ENCODE measurements at regions of chr2 and their contacts with region 1.

Region 1: DNA sequence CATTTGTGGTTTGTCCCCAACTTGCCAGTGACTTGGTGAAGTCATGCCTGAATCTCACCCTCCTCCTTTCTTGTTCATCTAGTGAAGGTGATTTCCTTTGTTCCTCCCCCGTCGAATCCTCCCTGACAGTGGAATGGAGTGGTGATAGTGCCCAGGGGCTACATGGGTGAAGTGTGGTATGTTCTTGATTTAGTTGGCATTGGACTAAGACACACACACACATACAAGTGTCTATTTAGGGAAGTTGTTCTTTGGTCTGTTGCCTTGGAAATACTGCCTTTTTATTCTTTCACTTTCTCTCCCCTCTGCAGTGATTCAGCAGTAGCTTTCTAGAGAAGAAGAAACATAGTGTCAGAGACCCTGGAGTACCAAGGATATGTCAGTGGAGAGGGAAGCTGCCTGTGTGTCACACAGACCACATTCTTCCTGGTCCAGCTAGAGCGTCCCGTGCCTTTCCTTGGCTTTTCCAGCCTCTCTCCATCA is 10.9 kb downstream of the INPP4A start:
- DNase-seq: peak; percentile 83 to 94 (median 91)
- H3K4me3 ChIP-seq: peak overlapping the region in 1 of 3 experiments; percentile 48
- H3K4me3 Mint-ChIP-seq: peak overlapping the region; percentile 62 to 86
- H3K27ac ChIP-seq: peak overlapping the region; percentile 92 to 97
- H3K27ac Mint-ChIP-seq: peak overlapping the region; percentile 97 to 100 (median 99)
- H3K4me1 ChIP-seq: peaks cover 72 to 88% of the 10 kb centered on the region in 2 donors
- H3K4me1 Mint-ChIP-seq: peaks cover 90% of the 10 kb centered on the region
- H3K27me3 ChIP-seq: no peaks in the 10 kb centered on the region
- H3K27me3 Mint-ChIP-seq: no peaks in the 10 kb centered on the region
- CTCF ChIP-seq: no peak

Region 2: GRCh38 chr2:98444436-98445176 is 10.9 kb before region 1 on chr2 and contains the start of gene INPP4A:
- intact Hi-C with region 1: loop called in 1 of 2 experiments (anchors 1 kb)
- DNase-seq: peak; percentile 45 to 70 (median 64)
- H3K4me3 ChIP-seq: peak within 1 kb of the TSS; percentile 65 to 98 (median 79)
- H3K4me3 Mint-ChIP-seq: peak within 1 kb of the TSS; percentile 97 to 99
- H3K27ac ChIP-seq: peak within 1 kb of the TSS; percentile 53 to 84
- H3K27ac Mint-ChIP-seq: peak within 1 kb of the TSS; percentile 94 to 98 (median 96)
- H3K4me1 ChIP-seq: peaks cover 27 to 37% of the 10 kb centered on the region in 2 donors
- H3K4me1 Mint-ChIP-seq: peaks cover 42% of the 10 kb centered on the region
- H3K27me3 ChIP-seq: no peaks in the 10 kb centered on the region
- H3K27me3 Mint-ChIP-seq: peaks cover 0 to 3% (median 0%) of the 10 kb centered on the region in 3 donors
- CTCF ChIP-seq: no peak
- polyA plus RNA-seq, gene INPP4A: 13.7 to 52.4 (median 20.7) TPM

Region 3: GRCh38 chr2:98508709-98509066 is 53.2 kb after region 1 on chr2:
- intact Hi-C with region 1: loop called (anchors 2 to 5 kb)
- DNase-seq: peak; percentile 95 to 97 (median 97)
- H3K4me3 ChIP-seq: peak overlapping the region in 1 of 3 experiments; percentile 41
- H3K4me3 Mint-ChIP-seq: peak overlapping the region; percentile 62 to 85
- H3K27ac ChIP-seq: peak overlapping the region; percentile 97 to 100
- H3K27ac Mint-ChIP-seq: peak overlapping the region; percentile 99 to 100 (median 100)
- H3K4me1 ChIP-seq: peaks cover 66 to 67% of the 10 kb centered on the region in 2 donors
- H3K4me1 Mint-ChIP-seq: peaks cover 83% of the 10 kb centered on the region
- H3K27me3 ChIP-seq: no peaks in the 10 kb centered on the region
- H3K27me3 Mint-ChIP-seq: peaks cover 0 to 3% (median 1%) of the 10 kb centered on the region in 3 donors
- CTCF ChIP-seq: no peak

Region 4: DNA sequence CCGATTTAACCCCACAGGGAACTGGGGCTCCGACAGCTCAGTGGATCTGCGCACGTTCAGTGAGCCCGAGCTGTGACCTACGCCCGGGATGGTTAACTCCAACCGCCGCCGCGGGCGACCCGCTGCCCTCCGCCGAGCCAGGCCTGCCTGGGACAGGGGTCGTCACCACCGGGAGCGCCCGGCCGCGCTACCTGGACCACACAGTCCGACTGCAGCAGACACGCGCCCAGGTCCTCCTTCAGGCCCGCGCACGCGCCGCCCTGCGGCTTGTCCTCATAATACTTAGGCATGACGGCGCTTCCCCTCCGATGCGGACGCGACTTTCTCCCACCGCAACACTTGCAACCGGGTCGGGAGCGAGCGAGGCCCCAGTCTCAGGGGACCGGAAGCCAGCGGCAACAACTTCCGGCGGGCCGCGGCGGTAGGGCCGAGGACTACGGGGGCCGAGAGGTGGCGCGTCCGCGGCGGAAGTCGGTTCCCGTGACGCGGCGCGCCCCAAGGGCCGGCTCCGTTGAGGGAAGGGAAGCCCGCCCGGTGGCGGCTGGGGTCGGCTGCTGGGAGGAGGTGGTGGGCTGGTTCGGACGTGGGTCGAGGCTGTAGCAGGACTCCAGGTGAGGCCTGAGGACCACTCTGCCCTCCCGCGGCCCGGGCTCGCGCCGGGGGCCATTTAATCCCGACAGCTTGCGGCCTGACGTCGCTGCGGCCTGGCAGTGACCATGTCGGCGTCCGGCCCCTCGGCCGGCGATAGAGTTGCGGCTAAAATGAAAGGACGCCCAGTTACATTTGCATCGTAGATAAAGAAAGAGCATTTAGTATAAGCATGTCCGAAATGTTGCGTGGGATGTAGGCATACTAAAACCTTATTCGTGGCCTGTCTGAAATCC is 152.8 kb after region 1 on chr2 and contains the starts of genes COA5 and UNC50:
- intact Hi-C with region 1: loop called in 1 of 2 experiments (anchors 10 kb)
- DNase-seq: peak; percentile 90 to 96 (median 94)
- H3K4me3 ChIP-seq: peak within 1 kb of the TSS; percentile 70 to 95 (median 95)
- H3K4me3 Mint-ChIP-seq: peak within 1 kb of the TSS; percentile 81 to 98
- H3K27ac ChIP-seq: peak within 1 kb of the TSS; percentile 79 to 99
- H3K27ac Mint-ChIP-seq: peak within 1 kb of the TSS; percentile 94 to 98 (median 96)
- H3K4me1 ChIP-seq: peaks cover 31 to 33% of the 10 kb centered on the region in 2 donors
- H3K4me1 Mint-ChIP-seq: peaks cover 47% of the 10 kb centered on the region
- H3K27me3 ChIP-seq: no peaks in the 10 kb centered on the region
- H3K27me3 Mint-ChIP-seq: no peaks in the 10 kb centered on the region
- CTCF ChIP-seq: no peak
- polyA plus RNA-seq, gene COA5: 27.3 to 42.9 (median 39.0) TPM
- polyA plus RNA-seq, gene UNC50: 32.5 to 72.0 (median 62.8) TPM